ENCODE measurements at regions of chr17 and their contacts with region 1.

Region 1: DNA sequence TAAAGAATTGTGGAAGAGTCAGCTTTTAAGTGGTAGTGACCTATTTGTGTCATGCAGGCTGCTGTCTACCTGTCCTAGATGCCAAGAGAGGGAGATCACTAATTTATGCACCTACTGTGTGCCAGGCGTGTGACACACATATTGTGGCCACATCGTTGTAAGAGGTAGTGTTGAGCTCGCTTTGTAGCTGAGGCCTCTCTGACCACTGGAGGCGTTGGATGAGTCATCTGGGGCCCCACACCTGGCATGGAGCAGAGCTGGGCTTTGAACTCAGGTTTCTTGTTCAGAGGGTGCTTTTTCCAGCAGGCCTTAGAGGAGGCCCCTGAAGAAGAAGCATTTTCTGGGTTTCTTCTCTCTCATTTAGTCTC is 52.3 kb upstream of the LGALS9 start:
- DNase-seq: peak; percentile 93
- H3K4me3 Mint-ChIP-seq: no peak overlapping the region
- H3K27ac Mint-ChIP-seq: peak overlapping the region; percentile 93
- H3K4me1 Mint-ChIP-seq: peaks cover 67% of the 10 kb centered on the region
- H3K27me3 Mint-ChIP-seq: no peaks in the 10 kb centered on the region

Region 2: GRCh38 chr17:27526604-27527230 is 52.0 kb before region 1 on chr17:
- CTCF ChIA-PET with region 1: interaction called, 3 read pairs
- intact Hi-C with region 1: loop called (anchors 1 kb)
- DNase-seq: peak; percentile 83
- H3K4me3 Mint-ChIP-seq: no peak overlapping the region
- H3K27ac Mint-ChIP-seq: no peak overlapping the region
- H3K4me1 Mint-ChIP-seq: peaks cover 80% of the 10 kb centered on the region
- H3K27me3 Mint-ChIP-seq: no peaks in the 10 kb centered on the region

Region 3: DNA sequence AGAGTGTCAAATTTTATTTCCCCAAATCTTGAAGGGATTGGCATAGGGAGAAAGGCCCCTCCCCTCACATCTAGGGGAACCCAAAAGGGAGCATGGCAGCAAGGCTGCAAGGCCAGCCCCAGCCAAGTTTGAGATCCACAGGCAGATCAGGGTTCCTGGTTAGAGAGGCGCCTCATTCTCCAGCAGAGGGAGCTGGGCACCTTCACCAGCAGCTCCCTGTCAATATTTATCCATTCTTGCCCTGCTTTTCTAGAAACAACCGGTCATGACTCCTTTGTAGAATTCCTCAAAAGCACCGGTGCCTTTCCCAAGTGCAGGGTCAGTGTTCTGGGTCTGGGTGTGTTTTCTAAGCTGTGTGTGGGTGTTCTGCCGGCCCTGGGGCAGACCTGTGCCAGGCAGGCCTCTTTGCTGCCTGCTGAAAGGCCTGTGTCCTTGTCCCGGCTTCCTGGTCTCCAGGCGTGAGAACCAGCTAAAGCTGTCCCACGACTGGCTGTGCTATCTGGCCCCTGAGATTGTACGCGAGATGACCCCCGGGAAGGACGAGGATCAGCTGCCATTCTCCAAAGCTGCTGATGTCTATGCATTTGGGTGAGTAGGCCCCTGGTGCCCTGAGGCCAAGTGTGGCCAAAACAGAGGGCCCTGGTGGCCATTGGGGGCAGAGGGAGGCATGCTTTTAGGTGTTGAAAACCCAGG is 31.1 kb after region 1 on chr17:
- CTCF ChIA-PET with region 1: no interaction called
- intact Hi-C with region 1: no loop called
- DNase-seq: peak; percentile 41
- H3K4me3 Mint-ChIP-seq: no peak overlapping the region
- H3K27ac Mint-ChIP-seq: no peak overlapping the region
- H3K4me1 Mint-ChIP-seq: peaks cover 24% of the 10 kb centered on the region
- H3K27me3 Mint-ChIP-seq: no peaks in the 10 kb centered on the region